Psoas muscle (tissue), 8 donors: ENCODE measurements at regions of chr1 and their contacts with region 1.

Region 1: GRCh38 chr1:232428786-232429530 is 201.0 kb downstream of the SIPA1L2 start:
- DNase-seq: no peak
- ATAC-seq: peak; percentile 94 to 98 (median 96)
- H3K4me3 ChIP-seq: peak overlapping the region; percentile 42
- H3K27ac ChIP-seq: peak overlapping the region; percentile 58
- H3K4me1 ChIP-seq: peaks cover 36% of the 10 kb centered on the region
- H3K27me3 ChIP-seq: no peaks in the 10 kb centered on the region
- CTCF ChIP-seq: no peak

Region 2: DNA sequence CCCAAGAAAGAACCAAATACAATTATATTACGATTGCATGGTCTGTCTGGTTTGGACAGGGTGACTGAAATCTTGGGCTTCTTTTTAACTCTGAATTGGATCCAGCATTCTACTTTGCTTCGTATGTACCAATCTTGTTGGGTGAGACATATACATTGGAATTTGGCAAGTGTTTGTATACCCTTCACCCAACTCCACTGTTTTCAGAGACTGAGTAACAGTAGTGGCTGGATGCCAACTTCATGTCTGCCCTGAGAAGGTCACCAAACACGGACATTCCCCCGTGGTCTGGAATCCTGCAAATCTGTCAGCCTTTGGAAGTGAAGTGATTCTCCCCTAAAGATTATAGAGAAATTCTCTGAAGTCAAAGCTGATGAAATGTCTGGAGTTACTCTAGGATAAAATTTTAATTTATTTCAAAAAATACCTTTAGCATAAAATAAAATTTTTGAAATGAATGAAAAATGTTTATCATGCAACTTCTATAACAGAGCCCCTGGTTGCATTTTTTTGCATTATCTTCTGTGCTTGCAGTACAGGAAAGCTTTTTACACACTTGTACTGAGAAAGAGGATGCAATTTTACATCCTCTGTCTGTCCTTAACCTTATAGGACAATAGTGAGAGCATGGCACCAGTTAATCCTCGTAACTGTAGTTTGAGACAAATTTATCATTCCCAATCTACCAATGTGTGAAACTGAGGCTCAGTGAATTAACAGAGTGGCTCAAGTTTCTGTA is 600.6 kb before region 1 on chr1:
- intact Hi-C with region 1: no loop called
- DNase-seq: no peak
- ATAC-seq: peak in 3 of 4 donors; percentile 19 to 63 (median 40)
- H3K4me3 ChIP-seq: no peak overlapping the region
- H3K27ac ChIP-seq: no peak overlapping the region
- H3K4me1 ChIP-seq: no peaks in the 10 kb centered on the region
- H3K27me3 ChIP-seq: no peaks in the 10 kb centered on the region
- CTCF ChIP-seq: no peak

Region 3: GRCh38 chr1:232196042-232196441 is 232.9 kb before region 1 on chr1:
- intact Hi-C with region 1: no loop called
- DNase-seq: no peak
- ATAC-seq: no peak
- H3K4me3 ChIP-seq: no peak overlapping the region
- H3K27ac ChIP-seq: no peak overlapping the region
- H3K4me1 ChIP-seq: no peaks in the 10 kb centered on the region
- H3K27me3 ChIP-seq: no peaks in the 10 kb centered on the region
- CTCF ChIP-seq: no peak

Region 4: GRCh38 chr1:232477728-232478127 is 48.8 kb after region 1 on chr1:
- intact Hi-C with region 1: loop called in 1 of 2 experiments (anchors 2 kb)
- DNase-seq: peak; percentile 15 to 39
- ATAC-seq: peak; percentile 85 to 97 (median 96)
- H3K4me3 ChIP-seq: no peak overlapping the region
- H3K27ac ChIP-seq: peak overlapping the region; percentile 81
- H3K4me1 ChIP-seq: peaks cover 41% of the 10 kb centered on the region
- H3K27me3 ChIP-seq: no peaks in the 10 kb centered on the region
- CTCF ChIP-seq: no peak

Region 5: DNA sequence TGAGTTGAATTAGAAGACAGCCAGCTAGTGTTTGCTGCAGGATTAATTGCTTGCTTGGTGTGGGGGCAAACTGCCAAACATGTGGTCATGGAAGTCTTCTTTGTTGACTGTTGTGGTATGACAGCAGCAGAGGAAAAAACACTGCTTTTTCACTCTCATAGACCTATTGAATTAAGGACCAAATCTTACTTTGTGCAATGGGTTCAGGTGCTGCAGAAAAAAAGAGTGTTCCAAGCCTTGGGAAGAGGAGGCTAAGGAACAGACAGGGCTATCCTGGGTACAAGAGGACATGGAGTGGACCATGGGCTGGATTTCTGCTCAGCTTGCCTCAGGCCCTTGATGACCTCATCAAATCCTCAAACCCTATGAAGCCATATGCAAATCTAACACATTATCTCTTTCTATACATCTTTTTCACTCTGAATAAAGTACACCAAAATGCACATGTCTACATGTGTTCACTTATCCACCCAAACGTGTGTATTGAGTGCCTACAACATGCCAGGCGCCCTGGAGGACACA is 139.4 kb after region 1 on chr1:
- intact Hi-C with region 1: loop called in 1 of 2 experiments (anchors 10 kb)
- DNase-seq: no peak
- ATAC-seq: no peak
- H3K4me3 ChIP-seq: no peak overlapping the region
- H3K27ac ChIP-seq: no peak overlapping the region
- H3K4me1 ChIP-seq: peaks cover 18% of the 10 kb centered on the region
- H3K27me3 ChIP-seq: no peaks in the 10 kb centered on the region
- CTCF ChIP-seq: no peak

Region 6: GRCh38 chr1:233439721-233440120 is 1010.8 kb after region 1 on chr1:
- intact Hi-C with region 1: no loop called
- DNase-seq: no peak
- ATAC-seq: no peak
- H3K4me3 ChIP-seq: no peak overlapping the region
- H3K27ac ChIP-seq: no peak overlapping the region
- H3K4me1 ChIP-seq: no peaks in the 10 kb centered on the region
- H3K27me3 ChIP-seq: no peaks in the 10 kb centered on the region
- CTCF ChIP-seq: no peak